Left cardiac atrium (tissue), 4 donors: ENCODE measurements at regions of chr9 and their contacts with region 1.

Region 1: DNA sequence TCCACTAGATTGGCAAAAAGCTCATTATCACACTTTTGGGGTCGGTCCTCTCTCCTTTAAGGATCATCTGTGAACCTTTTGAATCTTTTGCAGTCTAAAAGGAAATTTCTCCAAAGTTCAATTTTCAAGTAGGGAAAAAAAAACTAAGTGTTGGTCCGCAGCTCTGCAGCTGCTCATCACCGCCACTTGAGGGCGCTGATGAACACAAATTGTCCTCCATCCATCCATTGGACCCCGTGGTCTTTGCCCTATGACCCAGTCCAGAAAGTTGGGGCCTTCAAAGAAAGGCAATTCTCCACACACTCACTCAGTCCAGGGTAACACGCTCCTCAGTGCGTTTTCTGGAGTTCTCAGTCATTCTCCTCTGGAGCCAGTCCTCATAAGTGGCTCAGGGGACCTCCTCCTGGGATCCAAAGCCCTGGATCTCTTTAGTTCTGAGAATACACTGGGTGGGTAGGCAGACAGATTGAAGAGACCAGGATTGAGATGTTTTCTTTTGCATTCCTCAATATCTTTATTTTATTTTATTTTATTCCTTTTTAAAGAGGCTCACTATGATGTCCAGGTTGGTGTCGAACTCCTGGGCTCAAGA is 63.6 kb upstream of the SLC28A3 start:
- DNase-seq: no peak
- ATAC-seq: no peak

Region 2: GRCh38 chr9:84170521-84171141 is 233.6 kb before region 1 on chr9:
- intact Hi-C with region 1: no loop called
- DNase-seq: peak; percentile 82
- ATAC-seq: peak; percentile 97

Region 3: GRCh38 chr9:84652577-84653061 is 248.4 kb after region 1 on chr9:
- intact Hi-C with region 1: loop called in 1 of 2 experiments (anchors 10 kb)
- DNase-seq: no peak
- ATAC-seq: no peak

Region 4: DNA sequence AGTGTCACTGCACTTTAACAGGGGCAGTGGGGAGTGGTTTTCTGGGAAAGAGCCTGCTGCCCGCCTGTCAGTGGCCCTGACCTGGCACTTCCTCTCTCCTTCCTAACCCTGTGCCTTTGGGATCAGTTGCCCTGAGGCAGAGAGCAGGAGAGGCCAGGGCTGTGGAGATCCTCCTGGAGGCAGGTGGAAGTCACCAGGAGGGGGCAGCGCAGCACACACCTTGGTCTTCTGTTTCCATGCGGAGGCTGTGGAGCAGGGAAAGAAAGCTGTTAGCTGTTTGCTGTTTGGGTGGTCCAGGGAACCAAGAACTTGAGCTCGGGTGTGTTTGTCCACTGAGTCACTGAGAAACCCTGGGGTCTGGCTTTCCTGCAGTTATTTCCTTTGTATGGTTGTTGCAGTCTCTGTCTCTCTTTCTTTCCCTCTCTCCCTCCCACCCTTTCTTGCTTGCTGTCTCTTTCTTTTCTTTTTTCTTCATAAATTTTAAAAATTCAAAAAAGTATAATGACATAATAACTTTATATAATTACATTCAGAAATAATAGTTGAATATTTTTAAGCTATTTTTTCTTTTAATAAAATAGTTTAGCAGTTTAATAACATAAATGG is 293.4 kb after region 1 on chr9:
- intact Hi-C with region 1: no loop called
- DNase-seq: peak; percentile 76
- ATAC-seq: peak; percentile 70 to 74